GM10248 (cell line): ENCODE measurements at regions of chr19 and their contacts with region 1.

Region 1: DNA sequence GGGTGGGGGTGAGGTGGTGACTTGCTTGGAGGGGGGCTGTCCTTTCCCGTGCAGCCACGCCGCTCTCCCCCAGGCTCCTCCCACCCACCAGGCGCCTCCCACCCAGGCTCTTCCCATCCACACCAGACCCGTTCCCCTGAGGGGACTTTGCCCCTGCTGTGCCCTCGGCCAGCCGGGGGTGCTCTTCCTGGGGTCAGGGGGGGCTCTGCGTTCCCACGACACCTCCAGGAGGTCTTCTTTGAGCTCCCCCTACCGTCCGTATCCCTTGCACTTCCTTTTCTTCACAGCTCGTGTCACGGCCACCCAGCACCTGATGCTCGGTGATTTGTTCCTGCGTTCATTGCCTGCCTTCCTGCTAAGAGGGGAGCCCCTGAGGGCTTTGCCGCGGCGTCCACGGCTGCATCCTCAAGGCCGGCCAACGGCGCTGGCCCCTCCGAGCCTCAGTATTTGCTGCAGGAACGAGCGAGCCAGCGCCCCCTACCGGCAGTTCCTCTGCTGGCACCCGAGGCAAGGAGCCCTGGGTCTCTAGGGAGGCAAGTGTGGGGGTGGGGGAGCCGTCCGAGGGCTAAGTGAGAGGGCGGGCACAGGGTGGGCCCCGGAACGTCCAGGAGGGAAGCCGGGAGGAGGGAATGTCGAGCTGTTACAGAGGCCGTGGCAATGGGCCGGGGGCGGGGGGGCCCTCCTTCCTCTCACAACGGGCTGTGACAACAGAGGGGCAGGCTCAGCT is 11.8 kb downstream of the LRRC4B start:
- DNase-seq: peak; percentile 91
- CTCF ChIP-seq: peak; percentile 91

Region 2: GRCh38 chr19:50368649-50369570 is 187.5 kb before region 1 on chr19:
- CTCF ChIA-PET with region 1: interaction called, 11 read pairs
- POLR2A ChIA-PET with region 1: no interaction called
- DNase-seq: peak; percentile 84
- CTCF ChIP-seq: peak; percentile 86

Region 3: DNA sequence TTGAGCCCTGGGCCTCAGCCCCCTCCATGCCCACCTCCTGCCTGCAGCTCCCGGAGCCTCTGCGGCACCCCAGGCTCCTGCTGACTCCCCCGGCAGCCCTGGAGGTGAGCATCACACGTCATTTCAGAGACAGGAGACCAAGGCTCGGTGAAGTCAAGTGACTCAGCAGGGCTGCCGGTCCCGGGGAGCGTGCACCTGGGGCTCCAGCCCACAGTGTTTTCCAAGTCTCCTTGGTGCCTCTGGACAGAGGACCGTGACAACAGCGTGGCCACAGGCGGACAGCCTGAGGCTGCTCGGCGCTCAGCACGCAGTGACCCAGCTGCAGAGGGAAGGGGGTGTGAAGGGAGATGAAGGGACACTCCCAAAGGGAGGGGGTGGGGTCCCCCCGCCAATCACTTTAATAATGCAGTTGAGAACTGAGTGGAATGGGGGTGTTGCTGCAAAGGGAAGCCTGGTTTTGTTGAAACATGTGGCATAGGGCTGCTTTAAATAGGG is 25.3 kb before region 1 on chr19:
- CTCF ChIA-PET with region 1: interaction called, 154 read pairs
- POLR2A ChIA-PET with region 1: interaction called, 3 read pairs
- DNase-seq: no peak
- CTCF ChIP-seq: no peak

Region 4: GRCh38 chr19:50568321-50569075 is 12.1 kb after region 1 on chr19 and contains the start of gene LRRC4B:
- CTCF ChIA-PET with region 1: interaction called, 32 read pairs
- POLR2A ChIA-PET with region 1: no interaction called
- DNase-seq: no peak
- CTCF ChIP-seq: no peak

Region 5: GRCh38 chr19:50590191-50590590 is 33.7 kb after region 1 on chr19:
- CTCF ChIA-PET with region 1: interaction called, 10 read pairs
- POLR2A ChIA-PET with region 1: no interaction called
- DNase-seq: no peak
- CTCF ChIP-seq: no peak